PC-9 (cell line): ENCODE measurements at regions of chr13 and their contacts with region 1.

Region 1: GRCh38 chr13:105918842-105919741 is 616.4 kb downstream of the EFNB2 start:
- DNase-seq: peak; percentile 79 to 98
- H3K4me3 ChIP-seq: peak overlapping the region; percentile 47
- H3K27ac ChIP-seq: peak overlapping the region; percentile 99
- H3K4me1 ChIP-seq: peaks cover 40% of the 10 kb centered on the region
- H3K27me3 ChIP-seq: no peaks in the 10 kb centered on the region
- CTCF ChIP-seq: no peak

Region 2: DNA sequence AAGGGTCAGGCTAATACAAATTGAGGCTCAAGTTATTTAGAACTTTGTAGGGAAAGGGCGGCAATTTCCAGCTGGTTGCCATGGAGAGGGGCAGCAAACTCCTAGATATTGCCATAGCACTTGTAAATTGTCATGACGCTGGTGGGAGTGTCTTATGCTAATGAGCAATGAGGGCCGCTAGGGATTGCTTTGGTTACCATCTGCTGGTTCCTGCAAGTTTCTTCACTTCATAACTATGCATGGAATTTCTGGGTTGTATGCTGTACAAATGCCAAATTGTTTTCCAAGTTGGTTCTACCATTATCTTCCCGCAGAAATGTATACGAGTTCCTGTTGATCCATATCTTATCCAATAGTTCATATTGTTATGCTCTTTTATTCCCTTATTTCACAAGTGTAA is 723.0 kb before region 1 on chr13:
- CTCF ChIA-PET with region 1: no interaction called
- POLR2A ChIA-PET with region 1: no interaction called
- intact Hi-C with region 1: no loop called
- DNase-seq: peak; percentile 43 to 58
- H3K4me3 ChIP-seq: no peak overlapping the region
- H3K27ac ChIP-seq: no peak overlapping the region
- H3K4me1 ChIP-seq: no peaks in the 10 kb centered on the region
- H3K27me3 ChIP-seq: no peaks in the 10 kb centered on the region
- CTCF ChIP-seq: no peak

Region 3: GRCh38 chr13:105442941-105443340 is 476.2 kb before region 1 on chr13:
- CTCF ChIA-PET with region 1: no interaction called
- POLR2A ChIA-PET with region 1: no interaction called
- intact Hi-C with region 1: loop called (anchors 2 kb)
- DNase-seq: peak; percentile 28 to 98
- H3K4me3 ChIP-seq: no peak overlapping the region
- H3K27ac ChIP-seq: peak overlapping the region; percentile 68
- H3K4me1 ChIP-seq: peaks cover 16% of the 10 kb centered on the region
- H3K27me3 ChIP-seq: no peaks in the 10 kb centered on the region
- CTCF ChIP-seq: no peak

Region 4: DNA sequence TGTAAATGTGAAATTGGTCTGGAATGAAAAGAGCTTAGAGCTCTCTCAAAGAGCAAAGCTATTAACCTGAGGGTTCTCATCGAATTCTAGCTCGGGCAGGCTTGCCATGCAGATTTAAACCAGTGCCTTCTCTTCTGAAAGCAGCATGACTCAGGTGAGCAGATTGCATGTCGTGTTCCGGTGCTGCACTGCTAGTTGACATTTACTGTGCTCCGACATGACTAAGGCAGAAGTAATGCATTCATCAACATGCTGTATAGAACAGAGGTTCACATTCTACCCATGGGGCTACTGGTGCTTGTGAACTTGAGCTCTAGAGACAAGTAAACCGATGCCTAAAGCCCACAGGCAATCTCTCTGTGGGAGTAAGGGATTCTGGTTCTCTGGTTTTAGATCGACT is 331.3 kb before region 1 on chr13:
- CTCF ChIA-PET with region 1: no interaction called
- POLR2A ChIA-PET with region 1: interaction called, 5 read pairs
- intact Hi-C with region 1: loop called (anchors 1 kb)
- DNase-seq: peak; percentile 48 to 59
- H3K4me3 ChIP-seq: no peak overlapping the region
- H3K27ac ChIP-seq: no peak overlapping the region
- H3K4me1 ChIP-seq: peaks cover 12% of the 10 kb centered on the region
- H3K27me3 ChIP-seq: no peaks in the 10 kb centered on the region
- CTCF ChIP-seq: no peak

Region 5: GRCh38 chr13:105773863-105774538 is 145.1 kb before region 1 on chr13:
- CTCF ChIA-PET with region 1: no interaction called
- POLR2A ChIA-PET with region 1: no interaction called
- intact Hi-C with region 1: loop called (anchors 1 kb)
- DNase-seq: peak; percentile 76 to 99
- H3K4me3 ChIP-seq: peak overlapping the region; percentile 43
- H3K27ac ChIP-seq: peak overlapping the region; percentile 89
- H3K4me1 ChIP-seq: peaks cover 36% of the 10 kb centered on the region
- H3K27me3 ChIP-seq: no peaks in the 10 kb centered on the region
- CTCF ChIP-seq: no peak

Region 6: GRCh38 chr13:105785436-105785835 is 133.7 kb before region 1 on chr13:
- CTCF ChIA-PET with region 1: no interaction called
- POLR2A ChIA-PET with region 1: no interaction called
- intact Hi-C with region 1: no loop called
- DNase-seq: no peak
- H3K4me3 ChIP-seq: no peak overlapping the region
- H3K27ac ChIP-seq: no peak overlapping the region
- H3K4me1 ChIP-seq: no peaks in the 10 kb centered on the region
- H3K27me3 ChIP-seq: no peaks in the 10 kb centered on the region
- CTCF ChIP-seq: no peak

Region 7: DNA sequence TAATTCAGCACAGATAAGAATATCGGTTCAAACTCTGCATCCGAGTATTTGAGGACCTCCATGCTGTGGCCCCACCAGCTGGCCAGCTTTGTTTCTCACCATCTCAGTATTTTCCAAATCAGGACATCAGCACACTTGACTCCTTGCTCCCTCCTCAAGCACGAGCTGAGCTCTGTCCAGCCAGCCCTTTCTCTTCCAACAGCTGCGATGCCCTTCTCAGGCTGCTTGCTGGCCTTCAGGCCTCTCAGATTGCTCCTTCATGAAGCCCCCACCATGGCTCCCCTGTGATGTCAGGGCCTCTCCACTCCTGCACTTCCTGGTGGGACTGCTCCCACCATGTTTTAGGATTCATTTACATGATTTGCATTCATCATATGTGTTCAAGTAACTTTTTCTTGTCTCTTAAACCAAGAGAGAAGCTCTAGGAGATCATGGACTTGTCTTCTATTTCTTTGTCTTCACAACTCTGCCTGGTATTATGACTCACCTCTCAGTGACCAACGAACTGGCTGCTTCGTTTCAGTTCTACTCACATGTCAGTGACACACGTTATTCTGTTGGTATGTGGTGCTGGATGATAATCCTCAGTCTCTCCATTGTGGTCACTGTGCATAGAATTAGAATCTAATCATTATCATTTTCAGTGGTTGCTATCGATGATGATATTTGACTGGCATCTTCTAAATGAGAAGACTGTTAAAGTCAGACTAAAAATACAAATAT is 144.7 kb after region 1 on chr13:
- CTCF ChIA-PET with region 1: no interaction called
- POLR2A ChIA-PET with region 1: no interaction called
- intact Hi-C with region 1: no loop called
- DNase-seq: no peak
- H3K4me3 ChIP-seq: no peak overlapping the region
- H3K27ac ChIP-seq: no peak overlapping the region
- H3K4me1 ChIP-seq: no peaks in the 10 kb centered on the region
- H3K27me3 ChIP-seq: no peaks in the 10 kb centered on the region
- CTCF ChIP-seq: no peak

Region 8: GRCh38 chr13:106156468-106156867 is 237.4 kb after region 1 on chr13:
- CTCF ChIA-PET with region 1: no interaction called
- POLR2A ChIA-PET with region 1: no interaction called
- intact Hi-C with region 1: loop called (anchors 1 kb)
- DNase-seq: peak; percentile 52 to 99
- H3K4me3 ChIP-seq: 0 out of 2 replicates have a peak overlapping the region, but pooled peaks have one; percentile 1
- H3K27ac ChIP-seq: peak overlapping the region; percentile 96
- H3K4me1 ChIP-seq: peaks cover 43% of the 10 kb centered on the region
- H3K27me3 ChIP-seq: no peaks in the 10 kb centered on the region
- CTCF ChIP-seq: no peak